Right ventricle myocardium superior (tissue), 1 donor: ENCODE measurements at regions of chr19 and their contacts with region 1.

Region 1: GRCh38 chr19:33302175-33302973 is at the start of gene CEBPA:
- DNase-seq: peak; percentile 89
- ATAC-seq: peak; percentile 90
- total RNA-seq, gene CEBPA: 3.4 TPM

Region 2: DNA sequence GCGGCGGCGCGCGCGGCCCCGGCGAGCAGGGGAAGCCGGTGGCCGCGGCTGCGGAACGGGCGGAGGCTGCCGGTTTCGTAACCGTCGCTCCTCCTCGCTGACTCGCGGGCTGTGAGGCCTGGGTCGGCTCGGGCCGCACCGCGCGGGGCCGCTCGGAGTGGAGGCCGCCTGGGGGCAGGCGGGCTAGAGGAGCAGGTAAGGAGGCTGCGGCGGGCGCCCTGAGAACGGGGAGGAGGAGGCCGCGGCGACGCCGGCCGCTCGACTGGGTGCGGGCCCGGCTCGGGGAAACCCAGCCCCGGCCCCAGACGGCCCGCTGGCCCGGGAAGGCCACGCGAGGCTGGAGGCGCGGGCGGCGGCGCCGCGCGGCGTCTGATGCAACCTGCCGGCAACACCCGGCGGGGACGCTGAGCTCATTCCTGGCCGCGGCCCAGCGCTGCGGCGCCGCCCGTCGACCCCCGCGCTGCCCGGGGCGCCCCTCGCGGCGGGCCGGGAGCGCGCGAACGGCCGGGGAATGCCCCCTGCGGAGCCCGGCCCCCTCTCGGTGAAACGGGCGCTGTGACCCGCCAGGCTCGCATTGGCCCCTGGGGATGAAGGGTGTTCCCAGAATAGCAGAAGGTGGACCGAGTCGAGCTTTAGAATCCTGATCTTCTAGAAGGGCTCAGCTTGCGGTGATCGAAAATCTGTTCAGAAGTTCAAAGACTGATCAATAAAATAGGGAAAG is 71.5 kb after region 1 on chr19 and contains the start of gene CEBPG:
- intact Hi-C with region 1: loop called (anchors 5 kb)
- DNase-seq: peak; percentile 66
- ATAC-seq: peak; percentile 31
- total RNA-seq, gene CEBPG: 16.1 TPM